HepG2 (cell line): ENCODE measurements at regions of chr2 and their contacts with region 1.

Region 1: DNA sequence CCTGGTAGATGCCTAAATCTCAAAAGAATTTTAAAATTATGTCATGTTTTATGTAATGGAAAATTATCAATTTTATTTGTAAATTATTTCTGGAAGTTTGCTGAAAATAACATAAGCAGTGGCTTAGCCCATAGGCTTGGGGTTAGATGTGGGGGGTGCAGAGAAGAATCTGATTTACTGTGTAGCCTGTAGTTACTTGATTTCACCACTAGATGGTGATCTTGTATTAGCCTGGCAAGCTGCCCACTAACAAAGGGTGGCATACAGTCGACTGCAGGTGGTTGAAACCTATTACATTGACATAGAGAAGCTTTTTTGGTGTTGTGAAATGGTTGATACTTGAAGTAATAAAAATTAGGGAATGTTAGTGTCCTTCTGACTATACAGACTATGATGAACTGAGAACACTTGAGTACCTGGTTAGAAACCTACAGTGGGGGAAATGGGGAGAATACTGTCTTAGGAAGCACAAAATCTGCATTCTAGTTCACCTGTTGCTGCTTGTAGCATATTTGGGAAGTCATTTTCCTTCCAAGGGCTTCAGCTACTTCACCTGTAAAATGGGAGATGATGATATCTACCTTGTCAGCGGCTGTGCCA is 191.0 kb upstream of the LHCGR start:
- DNase-seq: peak; percentile 62
- ATAC-seq: peak; percentile 97
- H3K4me3 ChIP-seq: no peak overlapping the region
- H3K27ac ChIP-seq: no peak overlapping the region
- H3K4me1 ChIP-seq: no peaks in the 10 kb centered on the region
- H3K27me3 ChIP-seq: peaks cover 0 to 5% of the 10 kb centered on the region in 2 experiments; a peak in 1 of 5 replicates
- CTCF ChIP-seq: peak; percentile 93
- EP300 ChIP-seq: no peak
- POLR2A ChIP-seq: no peak
- RAD21 ChIP-seq: peak; percentile 87

Region 2: GRCh38 chr2:47917276-47917961 is 1029.1 kb before region 1 on chr2:
- CTCF ChIA-PET with region 1: no interaction called
- POLR2A ChIA-PET with region 1: no interaction called
- in situ Hi-C with region 1: no loop called
- intact Hi-C with region 1: no loop called
- DNase-seq: no peak
- ATAC-seq: no peak
- H3K4me3 ChIP-seq: no peak overlapping the region
- H3K27ac ChIP-seq: no peak overlapping the region
- H3K4me1 ChIP-seq: peaks cover 6% of the 10 kb centered on the region; the same call in 1 of the 2 replicates
- H3K27me3 ChIP-seq: peaks cover 0 to 1% of the 10 kb centered on the region in 2 experiments; a peak in 2 of 5 replicates
- CTCF ChIP-seq: no peak
- EP300 ChIP-seq: no peak
- POLR2A ChIP-seq: no peak
- RAD21 ChIP-seq: no peak

Region 3: DNA sequence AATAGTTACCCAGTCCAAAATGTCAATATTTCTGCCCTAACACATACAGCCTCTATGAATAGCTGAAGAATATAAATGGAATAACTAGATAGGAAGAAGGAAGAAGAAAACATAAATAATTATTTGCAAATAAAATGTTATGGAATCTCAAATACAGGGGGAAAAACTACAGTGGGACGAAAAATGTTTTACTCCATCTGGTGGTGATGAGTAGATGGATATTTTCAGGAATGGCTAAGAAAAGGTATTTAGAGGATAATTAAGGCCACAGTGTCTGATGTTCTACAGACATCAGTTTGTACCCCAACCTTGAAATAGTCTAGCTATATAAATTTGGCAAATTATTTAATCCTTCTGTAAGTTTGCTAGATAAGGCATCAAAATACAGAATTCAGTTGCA is 385.9 kb after region 1 on chr2:
- CTCF ChIA-PET with region 1: no interaction called
- POLR2A ChIA-PET with region 1: no interaction called
- in situ Hi-C with region 1: no loop called
- intact Hi-C with region 1: loop called (anchors 1 kb)
- DNase-seq: no peak
- ATAC-seq: no peak
- H3K4me3 ChIP-seq: no peak overlapping the region
- H3K27ac ChIP-seq: no peak overlapping the region
- H3K4me1 ChIP-seq: no peaks in the 10 kb centered on the region
- H3K27me3 ChIP-seq: no peaks in the 10 kb centered on the region
- CTCF ChIP-seq: no peak
- EP300 ChIP-seq: no peak
- POLR2A ChIP-seq: no peak
- RAD21 ChIP-seq: no peak

Region 4: DNA sequence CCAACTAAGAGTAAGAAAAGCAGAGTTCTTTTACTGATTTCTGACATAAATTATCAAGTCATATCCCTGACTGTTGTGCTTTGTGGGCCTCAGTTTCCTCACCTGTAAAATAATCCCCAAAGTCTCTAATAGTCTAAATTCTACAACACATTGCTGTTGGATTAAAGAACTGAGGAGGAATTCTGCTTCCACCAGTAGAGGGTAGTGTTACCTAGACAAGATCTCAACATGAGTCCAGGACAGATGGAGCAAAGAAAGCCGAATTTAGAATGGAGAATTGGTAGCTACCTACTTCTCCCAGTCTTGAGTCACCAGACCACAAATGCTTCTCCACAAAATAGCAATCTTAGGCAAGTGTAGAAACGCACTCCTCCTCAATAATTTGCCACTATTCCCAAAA is 670.3 kb after region 1 on chr2:
- CTCF ChIA-PET with region 1: no interaction called
- POLR2A ChIA-PET with region 1: no interaction called
- in situ Hi-C with region 1: no loop called
- intact Hi-C with region 1: loop called (anchors 1 kb)
- DNase-seq: peak; percentile 30
- ATAC-seq: peak; percentile 86
- H3K4me3 ChIP-seq: no peak overlapping the region
- H3K27ac ChIP-seq: no peak overlapping the region
- H3K4me1 ChIP-seq: 0 out of 2 replicates have a peak, but pooled peaks cover 2% of the 10 kb centered on the region
- H3K27me3 ChIP-seq: no peaks in the 10 kb centered on the region
- CTCF ChIP-seq: peak; percentile 65
- EP300 ChIP-seq: no peak
- POLR2A ChIP-seq: no peak
- RAD21 ChIP-seq: no peak

Region 5: DNA sequence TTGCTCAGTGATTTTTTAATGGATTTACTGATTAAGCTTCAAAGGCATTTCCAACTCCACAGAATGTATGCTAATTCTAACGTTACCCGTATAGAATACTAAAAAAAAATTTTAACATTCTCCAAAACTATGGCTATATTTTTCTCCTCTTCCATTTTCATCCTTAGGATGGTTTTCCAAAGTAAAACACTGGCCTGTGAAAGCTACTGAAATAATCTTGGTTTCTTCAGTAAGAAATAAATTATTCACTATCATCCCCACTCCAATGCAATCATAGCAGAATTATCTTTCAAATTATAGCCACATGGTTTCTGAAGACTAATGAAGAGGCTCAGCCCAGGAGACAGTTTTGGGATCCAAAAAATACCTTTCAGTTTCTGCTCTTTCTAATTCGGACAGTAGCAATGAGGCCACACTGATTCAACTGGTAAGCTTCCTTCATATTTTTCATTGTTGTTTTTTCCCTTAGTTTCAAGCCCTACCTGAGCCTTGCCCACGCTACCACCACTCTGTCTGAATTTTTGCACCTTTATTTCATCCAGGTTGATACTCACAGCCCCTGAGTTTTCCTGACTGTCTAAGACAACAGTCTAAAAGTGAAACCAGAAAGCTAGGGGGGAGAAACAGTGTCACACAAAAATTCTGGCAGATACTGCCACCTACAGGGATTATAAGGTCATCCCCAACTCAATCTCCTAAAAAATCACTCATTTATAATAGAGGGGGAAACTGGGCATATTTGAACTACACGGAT is 1197.5 kb after region 1 on chr2:
- CTCF ChIA-PET with region 1: interaction called, 10 read pairs
- POLR2A ChIA-PET with region 1: no interaction called
- in situ Hi-C with region 1: loop called (anchors 25 kb)
- intact Hi-C with region 1: no loop called
- DNase-seq: peak; percentile 68
- ATAC-seq: peak; percentile 100
- H3K4me3 ChIP-seq: peak overlapping the region; percentile 66 to 90 (median 71)
- H3K27ac ChIP-seq: no peak overlapping the region
- H3K4me1 ChIP-seq: no peaks in the 10 kb centered on the region
- H3K27me3 ChIP-seq: no peaks in the 10 kb centered on the region
- CTCF ChIP-seq: peak; percentile 77
- EP300 ChIP-seq: no peak
- POLR2A ChIP-seq: no peak
- RAD21 ChIP-seq: peak; percentile 64

Region 6: GRCh38 chr2:50492477-50492851 is 1545.9 kb after region 1 on chr2:
- CTCF ChIA-PET with region 1: interaction called, 4 read pairs
- POLR2A ChIA-PET with region 1: no interaction called
- in situ Hi-C with region 1: loop called (anchors 10 kb)
- intact Hi-C with region 1: loop called (anchors 2 kb)
- DNase-seq: peak; percentile 54
- ATAC-seq: peak; percentile 88
- H3K4me3 ChIP-seq: no peak overlapping the region
- H3K27ac ChIP-seq: no peak overlapping the region
- H3K4me1 ChIP-seq: no peaks in the 10 kb centered on the region
- H3K27me3 ChIP-seq: no peaks in the 10 kb centered on the region
- CTCF ChIP-seq: peak; percentile 72
- EP300 ChIP-seq: no peak
- POLR2A ChIP-seq: no peak
- RAD21 ChIP-seq: no peak